CD4-positive, alpha-beta T cell (primary cell): ENCODE measurements at regions of chr12 and their contacts with region 1.

Region 1: DNA sequence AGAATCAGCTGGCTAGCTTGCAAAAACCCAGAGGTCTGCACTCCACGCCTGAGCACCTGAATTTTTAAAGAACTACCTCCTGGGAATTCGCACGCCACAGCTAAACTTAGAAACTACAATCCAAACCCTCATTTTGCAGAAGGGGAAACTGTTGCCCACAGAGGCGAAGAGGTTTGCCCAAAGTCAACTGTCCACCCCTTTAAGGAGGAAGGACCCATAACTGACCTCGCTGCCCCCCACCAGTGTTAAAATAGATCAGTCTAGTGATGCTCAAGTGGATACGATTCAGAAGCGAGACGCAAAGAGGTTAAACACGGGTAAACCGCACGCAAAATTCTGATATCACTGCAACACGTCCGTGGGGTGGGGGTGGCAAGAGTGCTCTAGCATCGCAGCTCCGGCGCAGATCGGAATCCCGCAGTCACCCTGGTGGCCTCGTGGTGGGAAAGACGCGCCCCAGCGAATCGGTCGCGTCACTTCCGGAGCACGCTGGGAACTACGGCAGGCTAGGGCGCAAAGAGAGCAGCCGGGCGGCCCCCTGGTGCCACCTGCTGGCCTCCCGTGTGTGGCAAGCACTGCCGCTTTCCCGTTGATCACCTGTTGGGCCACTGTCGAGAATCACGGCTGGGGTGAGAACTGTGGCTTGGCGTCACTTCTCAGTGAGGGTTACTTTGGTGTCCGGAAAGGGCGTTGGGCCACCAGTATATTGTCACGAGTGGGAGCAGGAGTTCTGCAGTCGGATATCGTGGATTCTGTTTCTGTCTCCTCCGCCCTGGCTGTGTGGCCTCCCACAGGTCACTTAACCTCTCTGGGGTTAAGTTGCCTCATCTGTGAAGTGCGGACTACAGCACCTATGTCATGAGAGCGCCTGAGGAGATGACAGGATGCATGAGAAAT is at the start of gene ALKBH2:
- DNase-seq: peak; percentile 91 to 98 (median 94)
- ATAC-seq: peak; percentile 83
- H3K4me3 ChIP-seq: peak within 1 kb of the TSS; percentile 84
- H3K4me3 Mint-ChIP-seq: peak within 1 kb of the TSS; percentile 91
- H3K27ac ChIP-seq: peak within 1 kb of the TSS; percentile 64 to 66
- H3K27ac Mint-ChIP-seq: peak within 1 kb of the TSS; percentile 87
- H3K4me1 ChIP-seq: peaks cover 41% of the 10 kb centered on the region
- H3K4me1 Mint-ChIP-seq: peaks cover 43% of the 10 kb centered on the region
- H3K27me3 ChIP-seq: no peaks in the 10 kb centered on the region
- H3K27me3 Mint-ChIP-seq: no peaks in the 10 kb centered on the region
- CTCF ChIP-seq: peak; percentile 96
- total RNA-seq, gene ALKBH2: 12.8 to 14.0 TPM

Region 2: DNA sequence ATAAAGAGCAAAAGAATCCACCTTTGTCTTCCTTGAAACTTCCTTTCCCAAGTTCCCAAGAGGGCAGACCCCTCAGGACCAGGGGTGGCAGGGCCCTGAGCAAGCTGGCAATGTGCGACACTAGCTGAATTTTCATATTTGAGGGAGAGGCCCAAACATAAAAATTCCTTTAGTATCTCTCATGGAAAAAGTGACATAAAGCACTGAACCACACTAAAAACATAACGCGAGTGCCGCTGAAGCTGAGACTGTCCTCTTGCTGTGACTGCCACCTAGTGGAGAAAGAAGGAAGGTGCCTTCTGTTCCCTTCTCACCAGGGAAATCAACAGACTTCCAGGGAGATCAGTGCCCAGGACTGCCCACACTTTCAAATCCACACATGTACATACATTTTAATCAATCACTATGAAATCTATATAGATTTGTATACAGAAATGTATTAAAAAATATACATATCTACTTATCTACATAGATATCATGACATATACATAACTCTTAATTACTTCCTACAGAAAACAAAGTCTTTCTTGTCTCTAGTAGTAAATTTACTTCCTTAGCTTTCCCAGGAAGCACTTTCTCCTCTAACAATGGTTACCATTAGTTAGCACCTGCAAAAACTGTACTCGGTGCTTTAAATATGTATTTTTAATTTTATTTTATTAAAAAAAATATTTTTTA is 289.7 kb before region 1 on chr12:
- CTCF ChIA-PET with region 1: no interaction called
- POLR2A ChIA-PET with region 1: no interaction called
- intact Hi-C with region 1: loop called in 1 of 2 experiments (anchors 5 kb)
- DNase-seq: peak; percentile 39 to 87 (median 58)
- ATAC-seq: peak; percentile 96
- H3K4me3 ChIP-seq: no peak overlapping the region
- H3K4me3 Mint-ChIP-seq: no peak overlapping the region
- H3K27ac ChIP-seq: no peak overlapping the region
- H3K27ac Mint-ChIP-seq: no peak overlapping the region
- H3K4me1 ChIP-seq: peaks cover 4% of the 10 kb centered on the region
- H3K4me1 Mint-ChIP-seq: peaks cover 4% of the 10 kb centered on the region
- H3K27me3 ChIP-seq: no peaks in the 10 kb centered on the region
- H3K27me3 Mint-ChIP-seq: no peaks in the 10 kb centered on the region
- CTCF ChIP-seq: peak; percentile 94

Region 3: GRCh38 chr12:108884116-108885012 is 208.9 kb before region 1 on chr12:
- CTCF ChIA-PET with region 1: no interaction called
- POLR2A ChIA-PET with region 1: interaction called, 3 read pairs
- intact Hi-C with region 1: loop called (anchors 1 to 2 kb)
- DNase-seq: peak; percentile 42 to 82 (median 54)
- ATAC-seq: peak; percentile 61
- H3K4me3 ChIP-seq: no peak overlapping the region
- H3K4me3 Mint-ChIP-seq: no peak overlapping the region
- H3K27ac ChIP-seq: no peak overlapping the region
- H3K27ac Mint-ChIP-seq: no peak overlapping the region
- H3K4me1 ChIP-seq: no peaks in the 10 kb centered on the region
- H3K4me1 Mint-ChIP-seq: no peaks in the 10 kb centered on the region
- H3K27me3 ChIP-seq: no peaks in the 10 kb centered on the region
- H3K27me3 Mint-ChIP-seq: no peaks in the 10 kb centered on the region
- CTCF ChIP-seq: peak; percentile 60

Region 4: DNA sequence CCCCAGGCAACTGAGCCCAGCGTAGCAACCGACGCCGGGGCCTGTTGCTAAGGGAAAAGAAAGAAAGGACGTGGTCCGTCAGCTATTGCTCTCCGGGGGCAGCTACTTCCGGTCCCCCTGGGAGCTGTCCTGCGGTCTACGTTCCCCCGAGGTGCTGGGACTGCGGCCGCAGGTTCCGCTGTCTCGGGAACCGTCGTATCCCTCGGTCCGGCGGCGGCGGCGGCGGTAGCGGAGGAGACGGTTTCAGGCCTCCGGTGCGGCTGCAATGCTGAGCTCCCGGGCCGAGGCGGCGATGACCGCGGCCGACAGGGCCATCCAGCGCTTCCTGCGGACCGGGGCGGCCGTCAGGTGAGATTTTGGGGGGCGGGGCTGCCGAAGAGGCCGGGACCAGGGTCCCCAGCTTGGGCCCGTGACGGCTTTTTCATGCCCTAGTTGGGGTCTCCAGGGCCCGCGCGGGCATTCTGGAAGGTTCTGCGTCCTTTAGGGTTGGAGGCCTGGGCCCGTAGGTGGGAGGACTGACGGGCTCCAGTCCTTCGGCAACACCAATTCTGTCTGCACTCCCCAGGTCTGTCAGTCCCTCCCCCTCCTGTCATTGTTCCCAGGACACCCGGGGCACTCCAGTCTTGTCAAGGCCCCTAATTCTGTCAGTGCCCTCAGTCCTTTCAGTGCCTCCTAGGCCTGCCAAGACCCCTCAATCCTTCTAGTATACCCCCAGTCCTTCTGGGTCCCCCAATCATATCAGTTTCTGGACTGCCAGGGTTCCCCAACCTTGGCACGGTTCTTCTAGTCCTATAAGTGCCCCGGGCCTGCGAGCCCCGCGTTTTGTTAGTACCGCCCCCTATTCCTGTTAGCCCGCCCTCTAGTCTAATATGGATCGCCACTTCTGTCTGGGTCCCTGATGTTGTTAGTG is 40.6 kb before region 1 on chr12 and contains the start of gene USP30:
- CTCF ChIA-PET with region 1: interaction called, 31 read pairs
- POLR2A ChIA-PET with region 1: interaction called, 8 read pairs
- intact Hi-C with region 1: loop called (anchors 1 to 2 kb)
- DNase-seq: peak; percentile 75 to 93 (median 81)
- ATAC-seq: peak; percentile 77
- H3K4me3 ChIP-seq: peak within 1 kb of the TSS; percentile 92
- H3K4me3 Mint-ChIP-seq: peak within 1 kb of the TSS; percentile 98
- H3K27ac ChIP-seq: peak within 1 kb of the TSS; percentile 87
- H3K27ac Mint-ChIP-seq: peak within 1 kb of the TSS; percentile 86
- H3K4me1 ChIP-seq: peaks cover 23% of the 10 kb centered on the region
- H3K4me1 Mint-ChIP-seq: peaks cover 13% of the 10 kb centered on the region
- H3K27me3 ChIP-seq: no peaks in the 10 kb centered on the region
- H3K27me3 Mint-ChIP-seq: no peaks in the 10 kb centered on the region
- CTCF ChIP-seq: no peak
- total RNA-seq, gene USP30: 21.8 to 23.0 TPM

Region 5: DNA sequence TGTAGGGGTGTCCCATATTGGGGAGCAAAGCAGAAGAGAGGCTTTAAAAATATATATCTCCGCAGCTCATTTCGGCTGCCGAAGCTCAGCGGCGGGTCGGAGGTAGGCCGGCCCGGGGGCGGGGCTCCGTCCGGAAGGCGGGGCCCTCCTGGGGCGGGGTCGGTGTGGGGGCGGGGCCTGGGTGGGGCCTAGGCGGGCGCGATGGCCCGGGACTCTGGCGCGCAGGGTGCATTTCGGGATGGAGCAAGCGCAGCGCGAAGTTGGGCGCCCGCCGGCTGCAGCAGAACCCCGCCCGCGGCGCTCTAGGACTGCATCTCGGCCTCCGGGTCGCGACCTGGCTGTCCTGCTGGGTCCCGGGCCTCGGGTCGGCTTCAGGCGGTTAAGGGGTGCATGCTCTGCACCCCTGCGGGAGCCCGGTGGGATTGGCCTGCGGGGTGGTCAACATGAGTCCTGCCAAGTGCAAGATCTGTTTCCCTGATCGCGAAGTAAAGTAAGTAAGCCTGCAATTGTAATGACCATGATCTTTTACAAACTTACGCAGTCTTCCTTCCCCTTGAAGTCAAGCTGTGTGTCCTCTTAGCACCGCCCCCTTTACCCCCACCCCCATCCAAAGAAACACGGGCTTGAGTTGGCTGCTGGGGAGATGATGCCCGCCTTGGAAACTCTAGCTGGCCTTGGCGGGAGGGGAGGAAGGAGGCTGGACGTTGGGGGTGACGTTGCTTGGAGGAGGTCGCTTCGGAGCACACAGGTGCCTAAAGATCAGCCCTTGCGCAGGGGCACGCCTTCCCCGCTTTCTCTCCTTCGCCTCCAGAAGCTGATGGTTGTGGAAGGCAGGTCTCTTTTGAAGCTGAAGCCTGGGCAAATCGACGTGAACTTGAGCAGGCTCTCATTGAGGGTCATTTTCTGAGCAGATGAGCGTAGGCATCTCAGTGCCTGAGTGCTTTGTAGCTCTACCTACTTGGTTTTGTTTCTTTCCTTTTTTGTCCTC is 61.5 kb after region 1 on chr12:
- CTCF ChIA-PET with region 1: no interaction called
- POLR2A ChIA-PET with region 1: interaction called, 10 read pairs
- intact Hi-C with region 1: loop called (anchors 1 to 2 kb)
- DNase-seq: peak; percentile 71 to 90 (median 78)
- ATAC-seq: peak; percentile 95
- H3K4me3 ChIP-seq: peak overlapping the region; percentile 75
- H3K4me3 Mint-ChIP-seq: peak overlapping the region; percentile 96
- H3K27ac ChIP-seq: peak overlapping the region in 1 of 2 donors; percentile 17
- H3K27ac Mint-ChIP-seq: peak overlapping the region; percentile 93
- H3K4me1 ChIP-seq: peaks cover 16% of the 10 kb centered on the region
- H3K4me1 Mint-ChIP-seq: peaks cover 21% of the 10 kb centered on the region
- H3K27me3 ChIP-seq: no peaks in the 10 kb centered on the region
- H3K27me3 Mint-ChIP-seq: no peaks in the 10 kb centered on the region
- CTCF ChIP-seq: no peak

Region 6: DNA sequence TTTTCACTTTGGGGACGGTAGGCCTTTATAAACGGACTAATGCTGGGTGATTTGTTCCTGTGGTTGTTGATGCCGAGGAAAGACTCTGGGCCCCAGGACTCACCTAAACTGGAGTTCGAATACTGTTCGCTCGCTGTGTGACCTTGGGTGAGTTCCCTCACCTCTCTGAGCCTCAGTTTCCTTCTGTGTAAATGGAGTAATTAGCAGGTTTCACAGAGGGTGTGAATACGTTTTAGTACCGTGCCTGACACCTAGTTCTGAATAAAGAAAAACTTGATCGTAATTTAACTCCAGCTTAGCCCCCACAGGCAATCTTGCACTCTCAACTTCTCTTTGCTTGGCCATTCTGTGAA is 384.7 kb after region 1 on chr12:
- CTCF ChIA-PET with region 1: no interaction called
- POLR2A ChIA-PET with region 1: no interaction called
- intact Hi-C with region 1: no loop called
- DNase-seq: no peak
- ATAC-seq: no peak
- H3K4me3 ChIP-seq: peak overlapping the region; percentile 90
- H3K4me3 Mint-ChIP-seq: peak overlapping the region; percentile 98
- H3K27ac ChIP-seq: peak overlapping the region; percentile 73 to 87
- H3K27ac Mint-ChIP-seq: peak overlapping the region; percentile 92
- H3K4me1 ChIP-seq: peaks cover 30% of the 10 kb centered on the region
- H3K4me1 Mint-ChIP-seq: peaks cover 50% of the 10 kb centered on the region
- H3K27me3 ChIP-seq: no peaks in the 10 kb centered on the region
- H3K27me3 Mint-ChIP-seq: no peaks in the 10 kb centered on the region
- CTCF ChIP-seq: no peak